Activated CD4-positive, alpha-beta T cell treated with anti-CD3 and anti-CD28 coated beads, Interleukin-2, amount 10 ng/mL, durations not matched to agents 24 days and 14 days (primary cell): ENCODE measurements at regions of chr4 and their contacts with region 1.

Region 1: DNA sequence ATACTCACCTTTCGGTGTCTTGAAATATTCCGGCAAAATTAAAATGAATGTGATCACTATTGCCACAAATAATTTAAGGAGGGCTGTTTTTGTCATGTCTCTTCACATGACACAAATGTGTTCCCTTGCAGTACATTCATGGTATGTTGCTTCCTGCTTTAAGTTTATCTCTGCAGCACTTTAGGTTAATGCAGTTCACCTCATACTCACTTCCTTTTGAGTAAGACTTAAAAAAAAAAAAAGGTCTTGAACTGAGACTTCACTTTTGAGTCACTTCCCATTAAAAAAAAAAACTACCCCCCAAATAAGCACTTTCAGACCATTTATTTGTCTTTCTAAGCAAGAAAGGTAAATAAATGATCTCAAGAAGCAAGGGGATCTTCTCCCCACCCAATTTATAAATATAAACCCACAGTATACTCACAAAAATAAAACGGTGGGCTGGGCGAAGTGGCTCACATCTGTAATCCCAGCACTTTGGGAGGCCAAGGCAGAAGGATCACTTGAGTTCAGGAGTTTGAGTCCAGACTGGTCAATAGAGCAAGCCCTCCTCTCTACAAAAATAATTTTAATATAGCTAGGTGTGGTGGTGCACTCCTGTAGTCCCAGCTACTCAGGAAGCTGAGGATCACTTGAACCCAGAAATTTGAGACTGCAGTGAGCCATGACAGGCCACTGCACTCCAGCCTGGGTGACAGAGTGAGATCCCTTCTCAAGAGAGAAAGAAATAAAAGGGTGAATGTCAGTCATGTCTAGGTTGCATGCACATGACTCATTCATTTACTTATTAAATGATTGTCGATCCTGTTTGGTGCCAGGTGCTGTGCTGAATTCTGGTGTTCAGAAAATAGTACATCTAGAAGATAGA is at the start of gene TMEM156:
- DNase-seq: peak; percentile 81
- H3K4me3 Mint-ChIP-seq: peak within 1 kb of the TSS; percentile 88
- H3K27ac Mint-ChIP-seq: peak within 1 kb of the TSS; percentile 89
- H3K4me1 Mint-ChIP-seq: peaks cover 37% of the 10 kb centered on the region
- H3K27me3 Mint-ChIP-seq: no peaks in the 10 kb centered on the region
- total RNA-seq, gene TMEM156: 25.9 and 26.9 TPM in 2 replicates

Region 2: DNA sequence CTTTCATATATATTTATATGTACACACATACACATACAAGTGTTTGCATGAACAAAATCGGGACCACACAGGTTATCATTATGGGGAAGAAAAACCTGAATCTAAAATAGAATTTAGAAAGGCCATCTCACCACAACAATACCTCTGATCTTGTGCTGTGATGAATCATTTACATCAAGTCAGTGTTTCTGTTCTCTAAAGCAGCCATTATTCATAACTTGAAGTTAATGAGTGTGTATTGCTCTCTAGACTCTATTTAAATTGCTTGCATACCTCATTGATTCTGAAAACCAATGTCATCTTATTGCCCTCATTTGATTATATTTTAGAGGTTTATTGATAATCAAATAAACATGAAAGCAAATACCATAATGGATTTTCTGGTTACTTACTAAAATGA is 93.3 kb before region 1 on chr4:
- intact Hi-C with region 1: loop called (anchors 5 kb)
- DNase-seq: no peak
- H3K4me3 Mint-ChIP-seq: no peak overlapping the region
- H3K27ac Mint-ChIP-seq: peak overlapping the region; percentile 51
- H3K4me1 Mint-ChIP-seq: peaks cover 36% of the 10 kb centered on the region
- H3K27me3 Mint-ChIP-seq: no peaks in the 10 kb centered on the region

Region 3: GRCh38 chr4:38980903-38981676 is 51.4 kb before region 1 on chr4:
- intact Hi-C with region 1: loop called (anchors 1 kb)
- DNase-seq: peak; percentile 73
- H3K4me3 Mint-ChIP-seq: peak overlapping the region; percentile 69
- H3K27ac Mint-ChIP-seq: peak overlapping the region; percentile 87
- H3K4me1 Mint-ChIP-seq: peaks cover 55% of the 10 kb centered on the region
- H3K27me3 Mint-ChIP-seq: no peaks in the 10 kb centered on the region

Region 4: GRCh38 chr4:39044364-39044955 is 12.0 kb after region 1 on chr4:
- intact Hi-C with region 1: loop called (anchors 1 kb)
- DNase-seq: peak; percentile 99
- H3K4me3 Mint-ChIP-seq: peak overlapping the region; percentile 89
- H3K27ac Mint-ChIP-seq: peak overlapping the region; percentile 90
- H3K4me1 Mint-ChIP-seq: peaks cover 50% of the 10 kb centered on the region
- H3K27me3 Mint-ChIP-seq: no peaks in the 10 kb centered on the region

Region 5: DNA sequence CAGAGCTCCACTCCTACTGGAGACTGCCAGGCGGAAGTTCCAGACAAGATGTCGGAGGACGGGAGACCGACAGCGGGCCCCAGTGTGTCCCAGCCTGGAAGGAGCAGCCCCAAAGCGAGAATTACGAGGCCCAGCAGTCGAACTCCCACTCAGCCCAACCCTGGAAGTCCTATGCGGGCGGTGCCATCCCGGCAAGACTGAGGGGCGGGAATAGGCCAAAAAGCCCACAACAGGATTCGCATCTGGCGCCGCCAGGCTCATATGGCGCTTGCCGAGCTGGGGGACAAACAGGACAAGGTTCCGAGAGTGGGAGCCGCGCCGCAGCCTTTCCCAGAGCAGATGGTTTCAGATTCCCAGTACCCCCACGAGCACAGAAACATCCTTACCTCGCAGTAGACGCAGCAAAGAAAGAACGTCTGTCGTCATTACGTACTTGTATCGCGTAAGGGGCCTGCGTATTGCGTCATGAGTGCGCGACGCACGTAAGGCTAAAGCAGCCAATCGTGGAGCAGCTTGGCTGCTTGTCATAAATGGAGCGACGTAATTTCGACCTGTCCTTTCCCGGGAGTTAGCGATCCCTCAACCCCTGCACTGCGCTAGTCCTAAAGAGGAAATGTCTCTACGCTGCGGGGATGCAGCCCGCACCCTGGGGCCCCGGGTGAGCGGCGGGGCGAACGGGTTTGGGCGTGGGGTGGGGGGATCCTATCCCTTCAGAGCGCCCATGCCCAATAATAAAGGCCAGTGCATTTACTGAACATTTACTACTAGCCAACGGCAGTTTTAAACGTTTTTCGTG is 426.3 kb after region 1 on chr4 and contains the starts of genes LIAS and RPL9:
- intact Hi-C with region 1: loop called (anchors 2 kb)
- DNase-seq: peak; percentile 98
- H3K4me3 Mint-ChIP-seq: peak within 1 kb of the TSS; percentile 89
- H3K27ac Mint-ChIP-seq: peak within 1 kb of the TSS; percentile 98
- H3K4me1 Mint-ChIP-seq: peaks cover 35% of the 10 kb centered on the region
- H3K27me3 Mint-ChIP-seq: peaks cover 2% of the 10 kb centered on the region
- total RNA-seq, gene LIAS: 27.7 and 29.2 TPM in 2 replicates
- total RNA-seq, gene RPL9: 1,785 and 1,789 TPM in 2 replicates

Region 6: DNA sequence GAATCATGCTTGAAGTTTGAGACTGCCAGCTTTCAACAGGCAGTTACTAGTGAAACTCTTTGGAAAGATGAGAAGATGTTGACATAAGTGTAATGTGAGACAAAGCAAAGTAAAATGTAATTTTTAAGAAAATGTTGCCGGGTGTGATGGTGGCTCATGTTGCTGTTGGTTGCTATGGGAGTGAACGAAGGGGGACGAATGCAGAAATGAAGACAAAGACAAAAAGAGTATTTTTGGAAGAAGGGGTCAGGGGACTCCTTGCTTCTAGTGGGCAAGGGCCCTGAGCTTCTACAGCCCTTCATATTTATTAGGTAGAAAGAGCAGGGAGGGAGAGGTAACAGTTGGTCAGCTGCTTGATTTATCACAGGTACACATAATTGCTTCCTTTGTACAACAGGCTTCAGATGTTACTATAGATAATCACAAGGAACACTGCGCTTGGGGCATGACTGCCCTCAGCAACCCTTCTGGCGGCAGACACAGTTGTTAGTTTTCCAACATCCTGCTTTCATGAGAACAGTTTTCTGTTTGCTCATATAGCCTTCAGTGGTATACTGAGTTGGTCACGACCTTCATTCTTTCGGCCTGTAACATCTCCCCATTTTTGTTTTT is 506.7 kb after region 1 on chr4:
- intact Hi-C with region 1: no loop called
- DNase-seq: no peak
- H3K4me3 Mint-ChIP-seq: no peak overlapping the region
- H3K27ac Mint-ChIP-seq: no peak overlapping the region
- H3K4me1 Mint-ChIP-seq: no peaks in the 10 kb centered on the region
- H3K27me3 Mint-ChIP-seq: no peaks in the 10 kb centered on the region